Psoas muscle (tissue), 8 donors: ENCODE measurements at regions of chr12 and their contacts with region 1.

Region 1: DNA sequence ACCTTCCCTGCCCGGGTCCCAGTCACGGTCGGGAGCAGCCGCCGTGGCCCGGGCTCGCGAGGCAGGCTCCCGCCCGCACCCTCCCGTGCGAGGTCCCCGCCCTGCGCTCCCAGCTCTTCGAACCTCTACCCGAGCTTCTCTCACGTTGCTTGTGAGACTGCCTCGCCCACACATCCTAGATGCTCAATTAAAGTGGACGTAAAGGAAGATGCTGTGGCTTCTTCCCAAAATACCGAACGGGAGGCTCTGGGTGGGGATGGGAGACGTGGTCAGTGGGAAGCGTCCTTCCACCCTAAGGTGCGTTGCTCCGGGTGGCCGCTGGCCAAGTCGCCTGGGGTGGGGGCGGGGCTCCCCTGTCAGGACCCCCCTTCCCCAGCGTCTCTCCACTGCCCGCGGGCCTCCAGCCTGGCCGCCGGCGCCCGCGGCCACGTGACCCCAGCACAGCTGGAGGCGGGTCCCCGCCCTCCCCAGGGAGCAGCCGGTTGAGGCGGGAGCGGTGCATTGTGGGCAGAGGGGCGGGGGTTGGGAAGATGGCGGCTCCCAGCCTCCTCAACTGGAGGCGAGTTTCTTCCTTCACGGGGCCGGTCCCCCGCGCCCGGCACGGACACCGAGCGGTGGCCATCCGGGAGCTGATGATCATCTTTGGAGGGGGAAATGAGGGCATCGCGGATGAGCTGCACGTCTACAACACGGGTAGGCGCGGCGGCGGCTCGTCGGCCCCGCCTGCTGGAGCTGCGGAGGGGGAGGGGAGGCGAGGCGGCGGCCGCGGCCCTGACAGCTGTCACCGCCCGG is at the start of gene HCFC2:
- DNase-seq: peak; percentile 94 to 96
- ATAC-seq: peak; percentile 99
- H3K4me3 ChIP-seq: peak within 1 kb of the TSS; percentile 97
- H3K27ac ChIP-seq: peak within 1 kb of the TSS; percentile 96
- H3K4me1 ChIP-seq: peaks cover 19% of the 10 kb centered on the region
- H3K27me3 ChIP-seq: no peaks in the 10 kb centered on the region
- CTCF ChIP-seq: no peak
- total RNA-seq, gene HCFC2: 22.8 to 27.8 (median 24.5) TPM

Region 2: DNA sequence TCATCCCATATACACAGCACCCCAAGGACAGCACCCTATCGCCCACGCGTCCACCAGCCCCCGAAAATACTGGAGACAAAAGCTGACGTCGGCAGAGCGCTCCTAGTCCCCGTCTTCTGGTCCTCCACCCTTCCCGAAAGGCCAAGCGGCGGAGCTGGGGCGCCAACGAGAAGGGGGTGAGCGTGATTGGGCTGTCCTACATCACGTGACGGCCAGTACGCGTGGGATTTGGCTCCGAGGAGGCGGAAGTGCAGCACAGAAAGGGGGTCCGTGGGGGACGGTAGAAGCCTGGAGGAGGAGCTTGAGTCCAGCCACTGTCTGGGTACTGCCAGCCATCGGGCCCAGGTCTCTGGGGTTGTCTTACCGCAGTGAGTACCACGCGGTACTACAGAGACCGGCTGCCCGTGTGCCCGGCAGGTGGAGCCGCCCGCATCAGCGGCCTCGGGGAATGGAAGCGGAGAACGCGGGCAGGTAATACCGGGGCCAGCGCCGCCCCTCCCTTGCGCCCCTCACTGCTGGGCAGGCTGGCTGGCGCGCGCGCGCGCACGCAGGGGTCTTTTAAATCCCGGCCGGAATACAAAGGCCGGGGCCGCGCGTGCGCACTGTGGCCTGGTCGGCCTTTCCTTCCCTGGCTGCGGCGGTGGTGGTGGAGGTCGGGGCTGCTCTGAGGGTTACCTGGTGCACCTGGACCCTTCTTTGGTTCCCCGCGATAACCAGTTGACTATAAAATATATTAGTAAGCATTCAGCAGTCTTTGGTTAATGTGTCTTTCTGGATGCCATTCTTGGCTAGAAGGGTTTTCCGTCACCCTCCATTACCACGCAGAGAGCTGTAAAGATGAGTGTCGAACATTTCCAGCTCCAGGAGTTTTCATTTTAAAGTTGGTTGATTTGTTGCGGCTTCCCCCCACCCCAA is 98.4 kb before region 1 on chr12 and contains the start of gene TDG:
- intact Hi-C with region 1: loop called in 1 of 2 experiments (anchors 5 kb)
- DNase-seq: peak; percentile 99
- ATAC-seq: peak; percentile 99
- H3K4me3 ChIP-seq: peak within 1 kb of the TSS; percentile 92
- H3K27ac ChIP-seq: peak within 1 kb of the TSS; percentile 97
- H3K4me1 ChIP-seq: peaks cover 47% of the 10 kb centered on the region
- H3K27me3 ChIP-seq: no peaks in the 10 kb centered on the region
- CTCF ChIP-seq: no peak
- total RNA-seq, gene TDG: 5.5 to 15.5 (median 11.8) TPM

Region 3: DNA sequence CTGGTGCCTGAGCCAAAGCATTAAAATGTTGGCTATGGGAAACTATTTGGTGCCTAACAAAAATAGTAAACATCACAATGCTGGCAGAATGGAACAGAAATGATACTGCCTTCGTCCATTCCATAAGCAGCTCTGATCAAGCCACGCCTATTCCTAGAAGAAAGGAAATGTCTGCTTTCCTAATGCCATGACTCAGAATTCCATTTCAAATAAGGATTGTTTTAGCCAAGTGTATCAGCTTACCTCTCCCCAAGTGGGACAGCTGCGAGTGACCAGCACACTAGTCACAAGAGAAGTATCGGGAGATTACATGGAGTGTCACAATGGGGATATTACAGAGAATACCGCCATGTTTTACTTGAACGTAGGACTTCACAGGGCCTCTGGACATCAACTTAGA is 53.0 kb before region 1 on chr12:
- intact Hi-C with region 1: loop called in 1 of 2 experiments (anchors 5 kb)
- DNase-seq: peak in 1 of 2 donors; percentile 25
- ATAC-seq: peak; percentile 97 to 99 (median 98)
- H3K4me3 ChIP-seq: no peak overlapping the region
- H3K27ac ChIP-seq: peak overlapping the region; percentile 71
- H3K4me1 ChIP-seq: peaks cover 11% of the 10 kb centered on the region
- H3K27me3 ChIP-seq: no peaks in the 10 kb centered on the region
- CTCF ChIP-seq: no peak